AG04450 (cell line): ENCODE measurements at regions of chr4 and their contacts with region 1.

Region 1: DNA sequence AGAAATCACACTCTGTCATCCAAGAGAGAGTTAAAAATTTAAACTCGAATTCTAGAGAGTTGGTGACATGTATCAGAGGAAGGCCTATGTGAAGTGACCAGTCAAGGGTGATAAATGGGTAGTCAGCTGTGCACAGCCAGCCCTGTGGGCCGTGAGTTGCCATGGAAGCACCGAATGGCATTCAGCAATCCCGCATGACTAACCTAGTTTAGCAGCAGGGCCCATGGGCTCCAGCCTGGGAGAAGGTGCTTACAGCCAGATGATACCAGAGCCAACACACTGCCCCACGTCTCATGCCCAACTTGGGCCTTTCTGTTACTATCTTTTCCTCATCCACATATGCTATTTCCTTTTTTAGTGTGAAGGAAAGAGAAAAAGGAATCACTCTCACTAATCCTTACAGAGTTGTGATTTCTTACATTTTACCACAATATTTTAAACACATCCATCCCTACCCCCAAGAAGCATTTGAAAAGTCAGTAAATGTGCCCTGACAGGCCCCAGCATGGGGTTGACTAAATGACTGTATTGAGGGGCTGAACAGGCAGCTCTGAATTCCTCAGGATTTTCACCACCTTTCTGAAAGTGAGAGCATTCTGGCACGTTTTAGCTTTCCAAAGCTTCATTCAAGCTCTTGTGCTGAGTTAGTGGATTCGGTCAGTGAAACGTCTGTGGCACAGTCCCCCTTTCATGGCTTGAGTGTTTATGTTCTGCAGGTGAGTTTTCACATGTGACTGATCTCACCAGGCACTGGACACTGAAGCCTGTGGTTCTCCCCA is 104.2 kb downstream of the AFF1 start:
- DNase-seq: peak; percentile 59
- H3K4me3 ChIP-seq: no peak overlapping the region
- H3K27ac ChIP-seq: peak overlapping the region; percentile 49
- H3K27me3 ChIP-seq: no peaks in the 10 kb centered on the region
- CTCF ChIP-seq: no peak

Region 2: GRCh38 chr4:87235020-87235671 is 196.1 kb after region 1 on chr4:
- CTCF ChIA-PET with region 1: interaction called, 12 read pairs
- POLR2A ChIA-PET with region 1: no interaction called
- DNase-seq: no peak
- H3K4me3 ChIP-seq: peak overlapping the region; percentile 57; the same call in 1 of the 2 replicates
- H3K27ac ChIP-seq: no peak overlapping the region
- H3K27me3 ChIP-seq: no peaks in the 10 kb centered on the region
- CTCF ChIP-seq: no peak